GM10248 (cell line): ENCODE measurements at regions of chr3 and their contacts with region 1.

Region 1: GRCh38 chr3:136276049-136276755 is 26.1 kb downstream of the PCCB start:
- DNase-seq: no peak
- CTCF ChIP-seq: no peak

Region 2: GRCh38 chr3:136292500-136292899 is 16.3 kb after region 1 on chr3:
- CTCF ChIA-PET with region 1: interaction called, 12 read pairs
- POLR2A ChIA-PET with region 1: no interaction called
- DNase-seq: no peak
- CTCF ChIP-seq: no peak